ENCODE measurements at regions of chr6 and their contacts with region 1.

Region 1: GRCh38 chr6:137799950-137800568 is 67.0 kb upstream of the TNFAIP3 start:
- H3K4me3 Mint-ChIP-seq: no peak overlapping the region
- H3K27ac Mint-ChIP-seq: no peak overlapping the region
- H3K4me1 Mint-ChIP-seq: peaks cover 19% of the 10 kb centered on the region
- H3K27me3 Mint-ChIP-seq: peaks cover 20% of the 10 kb centered on the region

Region 2: DNA sequence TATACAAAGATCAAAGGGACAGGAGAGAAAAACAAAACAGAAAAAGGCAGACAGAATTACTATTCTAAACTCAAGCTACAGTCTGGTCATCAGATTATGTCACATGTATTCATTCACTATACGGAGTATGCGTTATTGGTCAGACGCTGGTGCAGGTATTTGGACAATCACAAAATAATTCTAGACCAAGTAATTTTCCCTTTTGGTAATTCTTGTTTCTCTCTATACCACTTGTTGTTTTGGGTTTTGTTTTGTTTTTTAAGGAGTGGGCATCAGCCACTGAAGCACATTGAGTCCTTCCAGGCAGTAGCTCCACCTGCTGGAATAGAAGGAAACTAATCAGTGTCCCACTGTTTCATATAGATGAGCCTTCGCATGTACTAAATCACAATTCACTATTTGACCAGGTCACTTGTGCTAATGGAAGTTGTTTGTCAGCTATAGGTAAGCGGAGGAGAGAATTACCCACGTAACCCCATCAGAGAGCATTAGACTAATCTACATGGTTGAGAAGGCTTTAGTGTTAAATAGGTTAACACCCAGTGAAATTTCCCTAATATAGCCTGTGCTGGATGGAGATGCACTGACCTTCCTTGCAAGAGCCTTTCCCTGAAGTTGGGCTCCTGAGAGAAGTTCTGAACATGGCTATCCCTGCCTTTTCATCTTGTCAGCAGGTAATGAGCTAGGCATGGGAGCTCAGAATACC is 144.9 kb after region 1 on chr6:
- intact Hi-C with region 1: loop called (anchors 10 kb)
- H3K4me3 Mint-ChIP-seq: no peak overlapping the region
- H3K27ac Mint-ChIP-seq: peak overlapping the region; percentile 54
- H3K4me1 Mint-ChIP-seq: peaks cover 22% of the 10 kb centered on the region
- H3K27me3 Mint-ChIP-seq: no peaks in the 10 kb centered on the region

Measured in dendritic cell treated with granulocyte-macrophage colony-stimulating factor and Interleukin-4, amounts not matched to agents 40 ng/mL and 50 ng/mL, for 4 days (primary cell).